AG04450 (cell line): ENCODE measurements at regions of chr17 and their contacts with region 1.

Region 1: DNA sequence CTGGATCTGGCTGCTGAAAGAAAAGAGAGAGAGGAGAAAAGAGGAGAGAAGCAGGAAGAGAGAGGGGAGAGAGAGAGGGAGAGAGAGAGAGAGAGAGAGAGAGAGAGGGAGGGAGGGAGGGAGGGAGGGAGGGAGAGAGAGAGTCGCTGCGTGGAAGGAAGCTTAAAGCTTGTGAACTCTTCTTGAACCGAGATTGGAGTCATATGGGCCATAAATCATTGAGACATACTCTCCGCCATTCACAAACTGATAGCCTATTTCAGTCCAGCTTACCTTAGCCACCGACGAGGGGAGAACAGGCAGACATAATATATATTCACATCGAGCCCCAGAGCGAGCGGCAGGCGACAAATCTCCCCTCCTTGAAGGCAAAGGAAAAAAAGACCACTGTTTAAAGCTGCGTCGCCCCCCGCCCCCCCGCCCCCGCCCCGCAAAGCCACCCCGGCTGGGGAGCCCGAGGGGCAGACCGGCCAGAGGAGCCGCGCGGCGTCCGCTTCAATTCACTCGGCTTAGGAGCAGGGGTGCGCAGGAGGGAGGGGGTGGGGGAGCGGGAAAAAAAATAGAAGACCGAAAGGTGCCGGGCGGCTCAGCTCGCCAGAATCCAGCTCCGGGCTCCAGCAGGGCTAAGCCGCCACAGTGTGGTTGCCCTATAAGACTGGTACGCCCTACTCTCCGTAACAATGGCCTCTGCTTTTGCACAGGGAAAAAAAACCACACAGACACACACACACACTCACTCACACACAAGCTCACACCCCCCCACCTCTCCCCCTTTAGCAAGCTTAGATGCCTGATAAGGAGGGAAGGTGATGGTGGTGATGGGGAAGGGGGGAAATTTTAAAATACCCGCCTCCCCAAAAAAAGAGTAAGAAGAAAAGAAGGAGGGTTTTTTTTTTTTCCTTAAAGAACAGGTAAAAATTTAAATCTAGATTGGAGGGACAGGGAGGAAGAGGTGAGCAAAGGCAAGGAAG is 10.6 kb upstream of the HOXB2 start:
- DNase-seq: peak; percentile 94
- H3K4me3 ChIP-seq: peak overlapping the region; percentile 63
- H3K27ac ChIP-seq: peak overlapping the region; percentile 90
- H3K27me3 ChIP-seq: no peaks in the 10 kb centered on the region
- CTCF ChIP-seq: no peak

Region 2: GRCh38 chr17:48565925-48566710 is 10.6 kb after region 1 on chr17:
- CTCF ChIA-PET with region 1: interaction called, 3 read pairs
- POLR2A ChIA-PET with region 1: interaction called, 40 read pairs
- DNase-seq: no peak
- H3K4me3 ChIP-seq: peak overlapping the region; percentile 65
- H3K27ac ChIP-seq: peak overlapping the region; percentile 83
- H3K27me3 ChIP-seq: no peaks in the 10 kb centered on the region
- CTCF ChIP-seq: no peak

Region 3: DNA sequence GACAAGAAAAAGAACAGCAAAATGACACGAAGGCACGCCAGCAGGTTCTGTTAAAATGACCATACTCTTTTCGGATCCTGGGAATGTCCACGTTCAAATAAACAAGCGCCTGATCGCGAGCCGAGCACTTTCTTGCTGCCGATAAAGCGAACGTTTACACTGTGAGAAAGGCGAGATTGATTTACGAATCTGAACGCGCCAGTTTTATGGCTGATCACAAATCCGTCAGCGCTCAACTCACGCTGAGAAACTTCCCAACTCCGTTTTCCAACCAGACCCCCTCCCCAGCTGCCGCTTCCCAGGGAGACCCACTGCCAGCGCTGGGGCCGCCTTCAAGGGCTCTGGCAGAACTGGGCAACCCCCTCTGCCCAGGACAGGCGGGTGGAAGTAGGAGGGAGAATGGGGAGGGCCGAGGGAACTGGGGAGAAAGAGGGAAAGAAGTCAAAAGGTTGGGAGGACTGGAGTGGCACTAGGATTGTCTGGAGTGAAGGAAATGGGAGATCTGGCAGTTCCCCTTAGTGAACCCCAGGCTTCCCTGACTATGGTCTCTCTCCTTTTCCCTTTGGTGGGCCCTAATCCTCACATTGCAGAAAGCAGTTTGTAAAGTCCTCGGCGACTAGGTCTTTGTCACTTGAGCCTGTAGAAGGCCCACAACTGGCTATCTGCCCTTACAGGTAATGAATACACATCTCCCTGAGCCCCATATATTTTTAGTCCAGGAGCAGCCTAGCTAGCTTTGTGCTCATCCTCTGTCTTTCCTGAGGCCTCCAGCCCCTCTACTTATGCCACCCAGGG is 15.7 kb after region 1 on chr17:
- CTCF ChIA-PET with region 1: interaction called, 4 read pairs
- POLR2A ChIA-PET with region 1: interaction called, 40 read pairs
- DNase-seq: no peak
- H3K4me3 ChIP-seq: peak overlapping the region; percentile 90
- H3K27ac ChIP-seq: peak overlapping the region; percentile 94
- H3K27me3 ChIP-seq: no peaks in the 10 kb centered on the region
- CTCF ChIP-seq: no peak

Region 4: DNA sequence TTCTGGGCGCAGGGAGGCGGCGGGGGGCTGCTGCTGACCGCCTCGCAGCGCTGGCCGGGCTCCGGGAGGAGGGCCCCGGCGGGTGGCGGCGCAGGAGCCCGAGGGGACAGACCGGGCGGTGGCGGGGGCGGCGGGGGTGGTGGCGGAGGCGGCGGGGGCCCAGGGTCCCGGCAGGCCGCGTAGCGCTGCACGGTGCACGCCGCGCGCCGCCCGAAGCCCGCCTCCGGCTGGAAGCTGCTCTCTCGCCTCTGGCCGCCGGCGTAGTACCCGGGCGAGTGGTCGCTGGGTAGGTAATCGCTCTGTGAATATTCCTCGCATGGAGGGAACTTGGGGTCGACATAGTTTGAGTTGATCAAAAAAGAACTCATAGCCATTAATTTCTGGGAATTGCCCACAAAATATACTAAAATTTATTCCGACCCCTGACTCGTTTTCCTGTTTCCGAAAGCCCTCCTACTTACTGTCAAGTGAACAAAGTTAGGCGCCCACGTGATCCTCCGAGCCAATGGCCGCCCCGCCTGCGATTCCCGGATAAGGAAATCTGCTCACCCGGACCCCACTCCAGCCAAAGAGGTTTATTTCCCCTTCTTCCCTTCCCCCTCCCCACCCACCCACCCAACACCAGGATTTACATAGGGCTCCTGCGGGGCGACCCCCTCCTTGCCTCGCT is 22.5 kb after region 1 on chr17 and contains the start of gene HOXB4:
- CTCF ChIA-PET with region 1: interaction called, 4 read pairs
- POLR2A ChIA-PET with region 1: interaction called, 10 read pairs
- DNase-seq: no peak
- H3K4me3 ChIP-seq: peak within 1 kb of the TSS; percentile 90
- H3K27ac ChIP-seq: peak within 1 kb of the TSS; percentile 98
- H3K27me3 ChIP-seq: no peaks in the 10 kb centered on the region
- CTCF ChIP-seq: no peak
- polyA plus RNA-seq, gene HOXB4: 5.8 and 6.1 TPM in 2 replicates

Region 5: DNA sequence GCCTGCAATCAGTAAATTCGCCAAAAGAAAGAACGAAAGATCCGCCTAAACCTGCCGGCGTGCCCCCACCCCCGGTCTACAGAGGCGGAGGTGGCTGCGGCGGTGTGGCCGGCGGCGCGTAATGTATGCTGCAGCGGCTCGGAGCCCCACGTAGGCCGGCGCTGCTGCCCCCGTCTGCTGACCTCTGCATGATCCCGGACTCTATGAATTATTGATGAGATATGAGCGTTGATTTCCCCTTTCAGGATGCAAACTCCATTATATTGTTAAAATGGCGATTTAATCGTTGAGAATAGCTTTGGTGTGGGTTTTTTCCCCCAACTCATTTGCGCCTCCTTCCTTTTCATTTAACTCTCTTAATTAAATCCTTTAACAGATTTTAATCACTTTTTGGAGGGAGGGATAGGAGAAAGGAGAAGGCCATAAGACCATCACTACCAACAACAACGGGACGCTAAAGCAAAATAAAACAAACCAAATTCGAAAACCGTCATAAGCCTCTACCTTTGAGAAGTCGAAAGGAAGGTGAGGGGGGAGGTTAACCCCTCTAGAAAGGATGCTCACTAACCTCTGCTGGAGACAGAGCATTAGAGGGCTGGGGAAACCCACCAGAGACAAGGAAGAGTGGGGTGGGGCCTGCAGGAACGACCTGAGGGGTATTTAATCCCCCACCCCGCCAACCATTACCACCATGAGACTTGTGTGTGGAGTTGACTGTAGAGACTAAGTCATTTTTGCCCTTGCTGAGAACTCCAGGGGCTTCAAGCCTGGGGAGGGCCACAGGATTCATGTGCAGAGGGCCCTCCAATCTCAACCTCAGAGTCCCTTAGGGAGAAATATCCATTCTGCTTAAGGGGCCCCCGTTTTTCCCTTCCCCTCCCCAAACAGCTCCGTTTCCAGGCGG is 31.1 kb after region 1 on chr17:
- CTCF ChIA-PET with region 1: interaction called, 3 read pairs
- POLR2A ChIA-PET with region 1: interaction called, 12 read pairs
- DNase-seq: no peak
- H3K4me3 ChIP-seq: peak overlapping the region; percentile 89
- H3K27ac ChIP-seq: peak overlapping the region; percentile 97
- H3K27me3 ChIP-seq: no peaks in the 10 kb centered on the region
- CTCF ChIP-seq: no peak